Dendritic cell treated with granulocyte-macrophage colony-stimulating factor and Interleukin-4, amounts not matched to agents 40 ng/mL and 50 ng/mL, for 4 days (primary cell): ENCODE measurements at regions of chr1 and their contacts with region 1.

Region 1: GRCh38 chr1:31483012-31483946 is 70.3 kb downstream of the SERINC2 start:
- H3K4me3 Mint-ChIP-seq: no peak overlapping the region
- H3K27ac Mint-ChIP-seq: peak overlapping the region; percentile 97
- H3K4me1 Mint-ChIP-seq: peaks cover 49% of the 10 kb centered on the region
- H3K27me3 Mint-ChIP-seq: no peaks in the 10 kb centered on the region

Region 2: GRCh38 chr1:31174556-31174955 is 308.7 kb before region 1 on chr1:
- intact Hi-C with region 1: no loop called
- H3K4me3 Mint-ChIP-seq: no peak overlapping the region
- H3K27ac Mint-ChIP-seq: no peak overlapping the region
- H3K4me1 Mint-ChIP-seq: peaks cover 12% of the 10 kb centered on the region
- H3K27me3 Mint-ChIP-seq: peaks cover 11% of the 10 kb centered on the region

Region 3: GRCh38 chr1:31460027-31460426 is 23.3 kb before region 1 on chr1:
- intact Hi-C with region 1: no loop called
- H3K4me3 Mint-ChIP-seq: no peak overlapping the region
- H3K27ac Mint-ChIP-seq: no peak overlapping the region
- H3K4me1 Mint-ChIP-seq: no peaks in the 10 kb centered on the region
- H3K27me3 Mint-ChIP-seq: peaks cover 3% of the 10 kb centered on the region

Region 4: DNA sequence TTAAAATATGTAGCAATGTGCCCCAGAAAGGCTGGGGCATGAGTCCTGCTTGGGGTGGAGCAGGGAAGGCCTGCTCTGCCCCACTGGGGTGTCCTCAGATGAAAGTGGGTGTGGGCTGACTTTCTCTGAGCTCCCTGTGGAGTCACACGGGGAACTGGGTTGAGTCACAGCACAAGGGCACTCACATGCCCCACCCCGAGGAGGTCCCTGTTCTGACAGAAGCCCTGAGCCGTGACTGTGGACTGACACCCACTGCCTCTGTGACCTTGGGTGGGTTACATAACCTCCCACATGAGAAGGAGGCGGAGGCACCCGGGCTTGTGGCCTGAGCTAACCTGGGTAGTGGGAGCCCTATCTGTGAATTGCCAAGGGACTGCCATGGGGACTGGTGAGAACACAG is 40.5 kb after region 1 on chr1:
- intact Hi-C with region 1: loop called (anchors 2 kb)
- H3K4me3 Mint-ChIP-seq: peak overlapping the region; percentile 53
- H3K27ac Mint-ChIP-seq: peak overlapping the region; percentile 95
- H3K4me1 Mint-ChIP-seq: peaks cover 53% of the 10 kb centered on the region
- H3K27me3 Mint-ChIP-seq: no peaks in the 10 kb centered on the region